HepG2 (cell line): ENCODE measurements at regions of chr2 and their contacts with region 1.

Region 1: DNA sequence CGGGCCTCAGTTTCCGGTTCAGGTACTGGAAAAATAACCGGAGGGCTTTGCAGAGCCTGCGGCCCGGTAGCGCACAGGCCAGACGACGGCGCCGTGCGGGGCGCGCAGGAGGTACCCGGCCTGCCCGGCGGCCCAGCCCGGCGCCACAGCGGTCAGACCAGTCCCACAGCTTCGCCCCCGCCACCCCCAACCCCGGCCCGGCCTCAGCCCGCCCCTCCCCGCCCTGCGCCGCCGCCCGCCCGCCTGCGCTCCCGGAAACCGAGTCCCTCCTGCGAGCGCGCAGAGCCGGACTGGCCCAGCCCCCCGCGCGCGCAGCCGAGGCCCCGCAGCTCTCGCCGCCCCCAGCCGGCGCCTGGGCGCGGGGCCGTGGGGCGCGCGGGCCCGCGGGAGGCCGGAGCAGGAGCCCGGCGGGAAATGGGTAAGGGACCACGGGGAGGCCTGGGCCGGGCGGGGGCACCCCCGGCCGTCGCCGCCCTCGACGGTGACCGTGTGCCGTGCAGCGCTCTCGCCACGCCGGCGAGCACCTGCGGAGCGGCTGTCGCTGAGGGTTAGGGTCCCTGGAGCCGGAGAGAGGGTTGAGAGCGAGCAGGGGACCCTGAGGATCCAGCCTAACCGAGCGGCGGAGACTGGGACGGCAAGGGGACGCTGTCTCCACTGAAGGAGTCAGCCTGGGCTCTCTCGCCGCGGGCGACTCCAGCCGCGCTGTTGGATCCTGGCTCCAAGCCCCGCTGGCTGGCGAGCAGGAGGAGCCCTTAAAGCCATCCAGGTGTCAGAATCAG is 16.5 kb upstream of the PSD4 start:
- DNase-seq: no peak
- ATAC-seq: peak; percentile 81
- H3K4me3 ChIP-seq: peak overlapping the region; percentile 56 to 82 (median 69)
- H3K27ac ChIP-seq: peak overlapping the region; percentile 64
- H3K4me1 ChIP-seq: peaks cover 43% of the 10 kb centered on the region
- H3K27me3 ChIP-seq: no peaks in the 10 kb centered on the region; a peak in 1 of 5 replicates
- CTCF ChIP-seq: peak; percentile 12; the same call in 1 of the 2 replicates
- EP300 ChIP-seq: no peak
- POLR2A ChIP-seq: peak in 1 of 2 experiments; percentile 59; a peak in 1 of 4 replicates
- RAD21 ChIP-seq: no peak

Region 2: DNA sequence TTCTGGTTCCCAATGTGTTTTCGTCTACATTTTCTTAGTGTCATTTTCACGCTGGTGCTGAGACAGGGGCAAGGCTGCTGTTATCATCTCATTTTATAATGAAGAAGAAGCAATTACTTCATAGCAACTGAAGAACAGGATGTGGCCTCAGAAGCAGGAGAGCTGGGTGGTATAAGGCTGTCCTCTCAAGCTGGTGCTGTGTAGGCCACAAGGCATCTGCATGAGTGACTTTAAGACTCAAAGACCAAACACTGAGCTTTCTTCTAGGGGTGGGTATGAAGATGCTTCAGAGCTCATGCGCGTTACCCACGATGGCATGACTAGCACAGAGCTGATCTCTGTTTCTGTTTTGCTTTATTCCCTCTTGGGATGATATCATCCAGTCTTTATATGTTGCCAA is 172.2 kb before region 1 on chr2:
- CTCF ChIA-PET with region 1: no interaction called
- POLR2A ChIA-PET with region 1: no interaction called
- in situ Hi-C with region 1: no loop called
- intact Hi-C with region 1: no loop called
- DNase-seq: no peak
- ATAC-seq: no peak
- H3K4me3 ChIP-seq: no peak overlapping the region
- H3K27ac ChIP-seq: no peak overlapping the region
- H3K4me1 ChIP-seq: no peaks in the 10 kb centered on the region
- H3K27me3 ChIP-seq: peaks cover 0 to 6% of the 10 kb centered on the region in 2 experiments; a peak in 1 of 5 replicates
- CTCF ChIP-seq: no peak
- EP300 ChIP-seq: no peak
- POLR2A ChIP-seq: no peak
- RAD21 ChIP-seq: no peak

Region 3: GRCh38 chr2:113060396-113060795 is 96.9 kb before region 1 on chr2:
- CTCF ChIA-PET with region 1: no interaction called
- POLR2A ChIA-PET with region 1: no interaction called
- in situ Hi-C with region 1: no loop called
- intact Hi-C with region 1: no loop called
- DNase-seq: no peak
- ATAC-seq: no peak
- H3K4me3 ChIP-seq: no peak overlapping the region
- H3K27ac ChIP-seq: no peak overlapping the region
- H3K4me1 ChIP-seq: no peaks in the 10 kb centered on the region
- H3K27me3 ChIP-seq: peaks cover 2 to 32% of the 10 kb centered on the region in 2 experiments; a peak in 4 of 5 replicates
- CTCF ChIP-seq: no peak
- EP300 ChIP-seq: no peak
- POLR2A ChIP-seq: no peak
- RAD21 ChIP-seq: no peak

Region 4: GRCh38 chr2:113105047-113105785 is 52.1 kb before region 1 on chr2:
- CTCF ChIA-PET with region 1: no interaction called
- POLR2A ChIA-PET with region 1: no interaction called
- in situ Hi-C with region 1: no loop called
- intact Hi-C with region 1: no loop called
- DNase-seq: no peak
- ATAC-seq: no peak
- H3K4me3 ChIP-seq: no peak overlapping the region
- H3K27ac ChIP-seq: no peak overlapping the region
- H3K4me1 ChIP-seq: no peaks in the 10 kb centered on the region
- H3K27me3 ChIP-seq: peaks cover 0 to 19% of the 10 kb centered on the region in 2 experiments; a peak in 3 of 5 replicates
- CTCF ChIP-seq: no peak
- EP300 ChIP-seq: no peak
- POLR2A ChIP-seq: no peak
- RAD21 ChIP-seq: no peak

Region 5: DNA sequence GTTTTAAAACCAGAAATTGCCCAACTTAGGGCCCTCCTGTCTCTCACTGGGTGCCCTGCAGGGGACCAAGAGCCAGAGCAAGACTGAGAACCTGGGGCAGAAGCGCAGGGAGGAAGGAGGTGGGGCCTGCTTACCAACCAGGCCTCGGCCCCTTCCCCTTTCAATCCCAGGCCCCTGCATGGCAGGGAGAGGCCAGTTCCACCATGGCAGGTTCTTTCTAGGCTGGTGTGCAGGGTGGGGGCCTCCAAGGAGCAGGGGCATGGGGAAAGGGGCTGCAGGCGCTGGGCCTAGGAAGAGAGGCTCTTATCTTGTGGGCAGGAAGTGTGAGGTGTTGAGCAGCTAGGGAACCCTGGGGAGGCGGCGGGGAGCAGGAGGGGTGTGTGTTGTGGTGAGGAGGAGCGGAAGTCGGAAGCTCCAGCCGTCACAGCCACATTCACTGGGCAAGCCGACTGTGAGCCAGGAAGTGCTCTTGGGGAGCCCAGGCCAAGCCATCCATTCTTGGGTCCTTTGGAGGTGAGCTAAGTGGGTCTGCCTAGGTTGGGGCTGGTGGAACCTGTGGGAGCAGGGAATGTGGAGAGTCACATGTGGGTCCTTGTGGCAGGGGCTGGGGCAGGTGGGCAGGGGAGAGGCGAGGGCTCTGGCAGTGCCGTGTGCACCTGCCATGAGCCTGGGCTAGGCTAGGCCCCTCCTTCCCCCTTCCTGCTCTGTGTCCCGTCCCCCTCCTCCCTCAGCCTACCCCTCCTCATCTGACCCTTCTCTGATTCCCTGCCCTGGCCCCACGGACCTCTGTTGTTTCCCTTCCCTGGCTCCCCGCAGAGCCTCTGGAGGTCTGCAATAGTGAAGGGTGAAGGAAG is 16.5 kb after region 1 on chr2 and contains the start of gene PSD4:
- CTCF ChIA-PET with region 1: no interaction called
- POLR2A ChIA-PET with region 1: interaction called, 103 read pairs
- in situ Hi-C with region 1: no loop called
- intact Hi-C with region 1: no loop called
- DNase-seq: no peak
- ATAC-seq: peak; percentile 74
- H3K4me3 ChIP-seq: peak within 1 kb of the TSS; percentile 32 to 59 (median 42)
- H3K27ac ChIP-seq: no peak within 1 kb of the TSS
- H3K4me1 ChIP-seq: peaks cover 69% of the 10 kb centered on the region
- H3K27me3 ChIP-seq: peaks cover 0 to 4% of the 10 kb centered on the region in 2 experiments; a peak in 2 of 5 replicates
- CTCF ChIP-seq: no peak
- EP300 ChIP-seq: no peak
- POLR2A ChIP-seq: peak; percentile 30 to 68; a peak in 3 of 4 replicates
- RAD21 ChIP-seq: no peak
- total RNA-seq, gene PSD4: 8.6 and 9.4 TPM in 2 replicates

Region 6: GRCh38 chr2:113181258-113182051 is 24.1 kb after region 1 on chr2:
- CTCF ChIA-PET with region 1: no interaction called
- POLR2A ChIA-PET with region 1: interaction called, 39 read pairs
- in situ Hi-C with region 1: no loop called
- intact Hi-C with region 1: loop called (anchors 1 kb)
- DNase-seq: peak; percentile 50
- ATAC-seq: peak; percentile 51
- H3K4me3 ChIP-seq: peak overlapping the region in 1 of 3 experiments; percentile 30; a peak in 1 of 6 replicates
- H3K27ac ChIP-seq: no peak overlapping the region
- H3K4me1 ChIP-seq: peaks cover 51% of the 10 kb centered on the region
- H3K27me3 ChIP-seq: no peaks in the 10 kb centered on the region
- CTCF ChIP-seq: 0 out of 2 replicates have a peak, but pooled peaks have one; percentile 2
- EP300 ChIP-seq: 0 out of 4 replicates have a peak, but pooled peaks of 1 of the 2 experiments have one; percentile 19
- POLR2A ChIP-seq: peak in 1 of 2 experiments; percentile 31; a peak in 1 of 4 replicates
- RAD21 ChIP-seq: no peak

Region 7: GRCh38 chr2:113342650-113343049 is 185.3 kb after region 1 on chr2:
- CTCF ChIA-PET with region 1: no interaction called
- POLR2A ChIA-PET with region 1: no interaction called
- in situ Hi-C with region 1: no loop called
- intact Hi-C with region 1: no loop called
- DNase-seq: no peak
- ATAC-seq: no peak
- H3K4me3 ChIP-seq: no peak overlapping the region
- H3K27ac ChIP-seq: no peak overlapping the region
- H3K4me1 ChIP-seq: no peaks in the 10 kb centered on the region
- H3K27me3 ChIP-seq: peaks cover 4 to 10% of the 10 kb centered on the region in 2 experiments; a peak in 3 of 5 replicates
- CTCF ChIP-seq: no peak
- EP300 ChIP-seq: no peak
- POLR2A ChIP-seq: no peak
- RAD21 ChIP-seq: no peak